ENCODE measurements at regions of chr6 and their contacts with region 1.

Region 1: GRCh38 chr6:37051138-37052026 is 45.9 kb downstream of the FGD2 start:
- DNase-seq: peak; percentile 95
- ATAC-seq: peak; percentile 47
- H3K4me3 Mint-ChIP-seq: peak overlapping the region; percentile 83
- H3K27ac Mint-ChIP-seq: peak overlapping the region; percentile 99
- H3K4me1 Mint-ChIP-seq: peaks cover 56% of the 10 kb centered on the region
- H3K27me3 Mint-ChIP-seq: no peaks in the 10 kb centered on the region
- CTCF ChIP-seq: peak; percentile 84

Region 2: DNA sequence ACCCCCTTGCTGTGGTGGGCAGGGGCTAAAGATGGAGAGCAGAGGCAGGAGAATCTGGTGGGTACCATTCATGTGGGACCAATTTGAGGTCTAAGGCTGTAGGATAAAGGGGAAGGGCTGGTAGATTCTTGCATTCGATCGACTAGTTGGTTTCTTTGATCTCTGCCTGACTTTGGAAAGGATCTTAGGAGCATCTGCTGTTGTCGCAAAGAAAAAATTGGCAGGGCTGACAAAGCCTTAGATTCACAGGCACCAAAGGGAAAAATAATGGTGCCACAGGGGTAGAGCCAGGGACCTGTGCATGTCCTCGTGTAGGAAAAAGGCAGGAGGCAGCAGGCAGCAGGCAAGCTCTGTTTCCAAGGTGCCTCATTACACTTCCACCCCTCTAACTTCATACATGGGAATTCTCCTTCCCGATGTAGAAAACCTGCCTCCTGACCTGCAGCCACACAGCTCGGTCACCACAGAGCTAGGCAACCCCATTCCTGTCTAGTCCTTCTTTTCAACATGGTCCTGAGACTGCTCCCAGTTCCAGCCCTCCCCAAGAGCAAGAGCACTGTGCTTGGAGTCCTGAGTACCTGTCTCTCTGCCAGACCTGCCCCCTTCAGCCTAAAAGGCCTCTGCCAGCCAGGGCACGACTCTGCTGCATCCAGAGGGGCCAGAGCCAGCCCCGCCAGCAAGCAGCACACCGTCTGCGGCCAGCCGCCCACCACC is 26.0 kb after region 1 on chr6:
- CTCF ChIA-PET with region 1: no interaction called
- POLR2A ChIA-PET with region 1: no interaction called
- intact Hi-C with region 1: no loop called
- DNase-seq: no peak
- ATAC-seq: no peak
- H3K4me3 Mint-ChIP-seq: no peak overlapping the region
- H3K27ac Mint-ChIP-seq: no peak overlapping the region
- H3K4me1 Mint-ChIP-seq: peaks cover 4% of the 10 kb centered on the region
- H3K27me3 Mint-ChIP-seq: no peaks in the 10 kb centered on the region
- CTCF ChIP-seq: no peak

Region 3: DNA sequence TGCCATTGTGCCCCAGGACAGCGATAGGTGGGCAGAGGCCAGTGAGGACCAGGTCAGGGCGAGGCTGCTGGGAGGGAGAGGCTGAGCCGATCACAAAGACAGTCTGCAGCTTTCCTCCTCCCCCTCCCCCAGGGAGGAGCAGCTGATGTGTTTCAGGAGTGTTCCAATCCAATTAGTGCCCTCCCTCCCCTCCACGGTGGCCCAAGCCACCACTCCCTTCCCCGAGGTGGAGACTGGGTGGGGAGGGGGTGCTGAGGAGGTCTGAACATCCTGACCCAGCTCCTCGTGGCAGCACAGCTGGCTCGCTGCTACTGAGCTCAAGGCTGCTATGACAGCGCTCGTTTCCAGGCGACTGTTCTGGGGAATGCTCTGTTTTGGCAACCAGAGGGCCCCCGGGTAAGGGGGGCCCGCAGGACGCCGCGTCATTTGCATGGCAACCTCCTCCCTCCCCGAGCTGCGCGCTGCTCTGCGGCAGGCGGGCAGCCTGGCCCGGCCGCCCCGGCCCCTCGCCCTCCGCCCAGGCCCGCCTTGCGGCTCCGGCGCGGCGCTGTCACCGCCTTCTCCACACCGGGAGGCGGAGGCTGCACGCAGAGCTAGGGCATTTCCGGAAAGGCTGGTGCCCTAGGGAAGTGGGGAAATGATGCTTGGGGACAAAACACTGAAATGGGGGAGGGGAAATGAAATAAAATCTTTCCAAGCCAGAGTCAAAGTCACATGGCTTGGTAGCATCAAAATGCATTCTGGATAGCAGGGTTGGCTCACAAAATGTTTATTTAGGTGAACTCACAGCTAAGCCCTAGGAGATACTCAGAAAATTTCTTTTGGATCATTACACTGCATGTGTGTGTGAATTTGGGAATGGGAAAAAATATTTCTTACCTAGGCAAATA is 51.1 kb after region 1 on chr6:
- CTCF ChIA-PET with region 1: interaction called, 10 read pairs
- POLR2A ChIA-PET with region 1: interaction called, 5 read pairs
- intact Hi-C with region 1: no loop called
- DNase-seq: peak; percentile 84
- ATAC-seq: peak; percentile 93
- H3K4me3 Mint-ChIP-seq: peak overlapping the region; percentile 65
- H3K27ac Mint-ChIP-seq: peak overlapping the region; percentile 79
- H3K4me1 Mint-ChIP-seq: peaks cover 21% of the 10 kb centered on the region
- H3K27me3 Mint-ChIP-seq: no peaks in the 10 kb centered on the region
- CTCF ChIP-seq: no peak

Region 4: GRCh38 chr6:37169496-37170272 is 118.3 kb after region 1 on chr6 and contains the start of gene PIM1:
- CTCF ChIA-PET with region 1: interaction called, 226 read pairs
- POLR2A ChIA-PET with region 1: interaction called, 261 read pairs
- intact Hi-C with region 1: loop called (anchors 2 kb)
- DNase-seq: peak; percentile 100
- ATAC-seq: peak; percentile 80
- H3K4me3 Mint-ChIP-seq: peak within 1 kb of the TSS; percentile 93
- H3K27ac Mint-ChIP-seq: peak within 1 kb of the TSS; percentile 98
- H3K4me1 Mint-ChIP-seq: peaks cover 37% of the 10 kb centered on the region
- H3K27me3 Mint-ChIP-seq: no peaks in the 10 kb centered on the region
- CTCF ChIP-seq: no peak
- total RNA-seq, gene PIM1: 293 to 305 TPM

Region 5: GRCh38 chr6:37182736-37183590 is 131.6 kb after region 1 on chr6:
- CTCF ChIA-PET with region 1: interaction called, 23 read pairs
- POLR2A ChIA-PET with region 1: interaction called, 261 read pairs
- intact Hi-C with region 1: no loop called
- DNase-seq: peak; percentile 88
- ATAC-seq: peak; percentile 94
- H3K4me3 Mint-ChIP-seq: peak overlapping the region; percentile 32
- H3K27ac Mint-ChIP-seq: peak overlapping the region; percentile 99
- H3K4me1 Mint-ChIP-seq: peaks cover 56% of the 10 kb centered on the region
- H3K27me3 Mint-ChIP-seq: no peaks in the 10 kb centered on the region
- CTCF ChIP-seq: no peak

Region 6: DNA sequence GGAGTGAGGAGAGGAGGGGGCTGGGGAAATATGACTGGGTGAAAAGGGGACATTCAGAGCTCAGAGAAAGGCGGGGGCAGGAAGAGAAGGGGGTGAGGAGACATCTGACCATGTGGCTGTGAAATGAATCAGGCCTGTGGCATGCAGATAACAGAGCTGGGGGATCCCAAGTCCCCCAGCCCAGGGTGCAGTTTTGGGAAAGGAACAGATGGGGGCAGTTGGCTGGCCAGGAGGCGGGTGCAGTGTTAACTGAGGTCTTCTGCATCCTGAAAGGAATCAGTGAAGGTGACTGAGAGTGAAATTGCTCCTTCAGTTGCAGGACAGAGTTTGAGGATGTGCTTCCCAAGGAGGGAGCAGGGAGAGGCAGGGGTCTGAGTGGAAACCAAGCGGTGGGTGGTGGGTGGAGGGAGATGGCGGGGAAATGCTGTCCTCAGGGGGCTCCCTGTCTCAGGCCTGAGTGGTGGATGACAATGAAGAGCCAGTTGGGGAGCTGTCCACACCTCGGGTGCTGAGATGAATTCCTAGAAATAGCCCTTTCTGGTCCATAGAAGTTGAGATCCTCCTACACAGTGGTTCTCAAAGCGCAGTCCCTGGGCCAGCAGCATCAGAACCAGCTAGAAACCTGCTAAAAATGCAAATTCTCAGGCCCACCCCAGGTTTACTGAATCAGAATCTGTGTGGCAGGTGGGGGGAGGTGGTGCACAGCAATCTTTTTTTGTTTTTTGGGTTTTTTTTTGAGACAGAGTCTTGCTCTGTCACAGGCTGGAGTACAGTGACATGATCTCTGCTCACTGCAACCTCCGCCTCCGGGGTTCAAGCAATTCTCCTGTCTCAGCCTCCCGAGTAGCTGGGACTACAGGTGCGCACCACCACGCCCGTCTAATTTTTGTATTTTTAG is 474.3 kb after region 1 on chr6:
- CTCF ChIA-PET with region 1: no interaction called
- POLR2A ChIA-PET with region 1: no interaction called
- intact Hi-C with region 1: no loop called
- DNase-seq: peak; percentile 42
- ATAC-seq: no peak
- H3K4me3 Mint-ChIP-seq: no peak overlapping the region
- H3K27ac Mint-ChIP-seq: no peak overlapping the region
- H3K4me1 Mint-ChIP-seq: peaks cover 51% of the 10 kb centered on the region
- H3K27me3 Mint-ChIP-seq: no peaks in the 10 kb centered on the region
- CTCF ChIP-seq: no peak

Measured in activated CD8-positive, alpha-beta T cell treated with anti-CD3 and anti-CD28 coated beads for 36 hours (primary cell).